CD8-positive, alpha-beta memory T cell (primary cell): ENCODE measurements at regions of chr19 and their contacts with region 1.

Region 1: DNA sequence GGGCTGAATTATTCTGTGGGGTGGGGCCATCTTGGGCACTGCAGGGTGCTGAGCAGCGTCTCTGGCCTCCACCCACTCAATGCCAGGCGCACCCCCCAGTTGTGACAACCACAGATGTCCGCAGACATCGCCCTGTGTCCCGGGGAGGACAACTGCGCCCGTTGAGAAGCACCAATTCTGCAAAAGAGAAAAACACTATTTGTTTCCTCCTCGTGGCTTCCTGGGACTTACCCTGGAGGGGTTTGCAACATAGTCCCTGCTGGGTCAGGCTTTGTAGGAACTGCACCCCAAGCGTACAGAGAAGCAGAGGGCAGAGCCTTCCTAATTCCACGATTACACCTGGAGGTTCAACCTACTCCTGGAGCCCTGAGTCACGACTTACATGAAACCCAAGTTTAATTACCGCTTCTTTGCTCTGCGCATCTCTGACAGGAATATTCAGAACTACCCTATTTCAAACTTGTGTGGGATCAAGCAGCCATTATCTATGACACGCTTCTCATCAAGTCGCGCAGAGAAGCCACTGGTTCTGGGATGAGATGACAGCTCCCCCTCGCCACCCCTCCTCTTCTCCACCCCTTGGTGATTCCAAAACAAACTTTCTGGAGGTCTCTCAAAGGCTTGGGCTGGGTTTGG is 11.1 kb upstream of the SLC39A3 start:
- DNase-seq: no peak
- H3K4me3 ChIP-seq: no peak overlapping the region
- H3K4me3 Mint-ChIP-seq: no peak overlapping the region
- H3K27ac ChIP-seq: no peak overlapping the region
- H3K27ac Mint-ChIP-seq: no peak overlapping the region
- H3K4me1 ChIP-seq: peaks cover 4% of the 10 kb centered on the region
- H3K4me1 Mint-ChIP-seq: no peaks in the 10 kb centered on the region
- H3K27me3 ChIP-seq: no peaks in the 10 kb centered on the region
- H3K27me3 Mint-ChIP-seq: peaks cover 0 to 5% of the 10 kb centered on the region in 2 donors

Region 2: DNA sequence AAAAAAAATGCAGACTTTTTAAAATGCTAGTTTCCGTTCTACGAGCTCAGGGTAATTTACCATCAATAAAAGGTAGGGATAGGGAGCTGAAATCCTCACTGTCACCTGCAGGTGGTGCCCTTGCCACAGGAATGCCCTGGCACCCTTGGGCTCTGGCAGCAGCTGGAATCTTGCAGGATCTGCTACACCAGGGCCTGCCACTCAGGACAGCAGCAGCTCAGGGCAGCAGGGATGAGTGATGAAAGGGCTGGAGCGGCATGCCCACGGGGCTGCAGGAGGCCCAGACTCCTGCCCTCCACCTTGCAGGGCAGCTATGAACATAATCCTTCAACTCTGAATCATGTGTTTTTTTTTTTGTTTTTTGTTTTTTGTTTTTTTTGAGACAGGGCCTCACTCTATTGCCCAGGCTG is 102.4 kb before region 1 on chr19:
- CTCF ChIA-PET with region 1: interaction called, 45 read pairs
- POLR2A ChIA-PET with region 1: interaction called, 6 read pairs
- DNase-seq: peak; percentile 57 to 77 (median 63)
- H3K4me3 ChIP-seq: no peak overlapping the region
- H3K4me3 Mint-ChIP-seq: no peak overlapping the region
- H3K27ac ChIP-seq: no peak overlapping the region
- H3K27ac Mint-ChIP-seq: no peak overlapping the region
- H3K4me1 ChIP-seq: no peaks in the 10 kb centered on the region
- H3K4me1 Mint-ChIP-seq: no peaks in the 10 kb centered on the region
- H3K27me3 ChIP-seq: no peaks in the 10 kb centered on the region
- H3K27me3 Mint-ChIP-seq: no peaks in the 10 kb centered on the region

Region 3: GRCh38 chr19:2663920-2664571 is 86.9 kb before region 1 on chr19:
- CTCF ChIA-PET with region 1: no interaction called
- POLR2A ChIA-PET with region 1: no interaction called
- DNase-seq: no peak
- H3K4me3 ChIP-seq: no peak overlapping the region
- H3K4me3 Mint-ChIP-seq: no peak overlapping the region
- H3K27ac ChIP-seq: no peak overlapping the region
- H3K27ac Mint-ChIP-seq: no peak overlapping the region
- H3K4me1 ChIP-seq: no peaks in the 10 kb centered on the region
- H3K4me1 Mint-ChIP-seq: no peaks in the 10 kb centered on the region
- H3K27me3 ChIP-seq: no peaks in the 10 kb centered on the region
- H3K27me3 Mint-ChIP-seq: peaks cover 5 to 6% of the 10 kb centered on the region in 2 donors